Natural killer cell (primary cell): ENCODE measurements at regions of chr17 and their contacts with region 1.

Region 1: DNA sequence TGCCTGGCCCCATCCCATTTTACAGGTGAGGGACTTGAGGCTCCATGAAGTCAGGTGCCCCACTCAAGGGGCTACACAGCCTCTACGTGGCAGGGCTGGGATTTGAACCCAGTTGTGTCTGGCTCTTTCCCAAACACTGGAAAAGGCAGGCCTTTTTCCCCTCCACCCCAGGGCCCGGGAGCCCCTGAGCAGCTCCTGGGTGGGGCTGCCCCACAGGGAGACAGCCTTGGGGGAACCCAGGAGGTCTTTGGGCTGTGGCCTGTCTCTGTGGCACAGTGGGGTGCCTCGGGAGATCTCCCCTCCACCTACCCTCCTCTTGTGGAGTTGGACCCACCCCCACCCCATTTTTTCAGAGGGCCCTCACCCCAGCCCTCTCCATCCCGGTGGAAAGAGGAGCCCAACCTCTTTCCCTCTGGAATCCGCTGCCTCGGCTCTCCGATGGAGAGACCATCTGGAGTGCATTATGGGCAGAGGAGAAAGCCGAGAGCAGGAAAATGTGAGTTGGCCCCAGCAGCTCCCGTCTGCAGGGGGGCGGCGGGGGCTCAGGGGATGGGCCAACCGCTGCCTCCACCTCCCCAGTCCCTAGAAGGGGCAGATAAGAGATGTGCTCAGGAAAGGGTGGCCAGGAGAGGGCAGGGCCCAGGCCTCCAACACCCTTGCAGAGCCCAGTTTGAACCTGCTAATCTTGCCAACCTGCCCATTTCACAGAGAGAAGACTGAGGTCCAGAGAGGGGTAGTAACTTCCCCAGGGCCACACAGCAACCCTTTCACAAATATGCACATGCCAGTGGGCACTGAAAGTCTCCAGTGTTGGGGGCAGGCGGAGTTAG is 15.4 kb upstream of the TMEM92 start:
- DNase-seq: no peak
- ATAC-seq: no peak
- H3K4me3 ChIP-seq: no peak overlapping the region
- H3K4me3 Mint-ChIP-seq: no peak overlapping the region
- H3K27ac ChIP-seq: no peak overlapping the region
- H3K27ac Mint-ChIP-seq: no peak overlapping the region
- H3K4me1 ChIP-seq: no peaks in the 10 kb centered on the region
- H3K4me1 Mint-ChIP-seq: peaks cover 0 to 6% of the 10 kb centered on the region in 2 donors
- H3K27me3 ChIP-seq: no peaks in the 10 kb centered on the region
- H3K27me3 Mint-ChIP-seq: peaks cover 12 to 21% of the 10 kb centered on the region in 2 donors
- CTCF ChIP-seq: no peak

Region 2: DNA sequence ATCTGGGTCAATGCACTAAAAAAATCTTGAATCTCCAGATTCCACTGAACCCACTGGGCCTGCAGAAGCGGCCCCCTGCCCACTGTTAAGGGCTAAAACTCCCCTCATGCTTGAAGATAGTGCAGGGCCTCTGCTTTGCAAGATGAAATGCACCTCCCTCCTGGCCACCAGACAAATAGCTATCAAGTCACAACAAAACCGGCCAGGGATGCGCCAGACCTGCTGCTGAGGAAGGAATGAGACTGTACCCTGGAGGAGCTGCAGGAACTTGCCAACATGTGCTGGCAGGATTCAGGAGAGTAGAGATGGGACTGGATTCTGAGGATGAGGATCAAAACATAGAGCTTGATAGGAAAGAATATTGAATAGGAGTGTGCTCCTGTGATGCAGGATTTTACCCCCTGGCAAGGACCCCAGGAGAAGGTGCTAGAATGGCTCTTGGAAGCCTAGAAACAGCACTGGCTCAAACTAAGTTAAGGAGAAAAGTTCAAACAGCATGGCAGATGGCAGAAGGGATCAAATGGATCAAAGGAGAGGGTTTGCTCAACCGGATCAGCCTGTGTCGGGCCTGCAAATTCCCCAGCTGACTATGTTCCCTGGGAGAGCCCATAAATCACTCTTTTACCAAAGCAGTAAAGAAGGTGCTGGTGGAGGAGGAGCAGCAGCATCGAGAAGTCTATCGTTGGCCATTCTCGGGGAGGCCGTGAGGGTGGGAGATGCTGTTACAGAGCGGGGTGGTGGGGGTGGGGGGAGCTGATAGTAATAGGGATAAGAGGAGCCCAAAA is 59.8 kb after region 1 on chr17:
- intact Hi-C with region 1: loop called (anchors 10 kb)
- DNase-seq: no peak
- ATAC-seq: no peak
- H3K4me3 ChIP-seq: no peak overlapping the region
- H3K4me3 Mint-ChIP-seq: no peak overlapping the region
- H3K27ac ChIP-seq: no peak overlapping the region
- H3K27ac Mint-ChIP-seq: no peak overlapping the region
- H3K4me1 ChIP-seq: no peaks in the 10 kb centered on the region
- H3K4me1 Mint-ChIP-seq: no peaks in the 10 kb centered on the region
- H3K27me3 ChIP-seq: no peaks in the 10 kb centered on the region
- H3K27me3 Mint-ChIP-seq: peaks cover under 1 to 3% of the 10 kb centered on the region in 2 donors
- CTCF ChIP-seq: no peak